Tibial artery (tissue), 4 donors: ENCODE measurements at regions of chr6 and their contacts with region 1.

Region 1: GRCh38 chr6:31139599-31139998 is 733 bp upstream of the PSORS1C2 start:
- DNase-seq: no peak
- H3K4me3 ChIP-seq: no peak overlapping the region
- H3K27ac ChIP-seq: no peak overlapping the region
- H3K4me1 ChIP-seq: peaks cover 0 to 15% (median 4%) of the 10 kb centered on the region in 4 donors
- H3K27me3 ChIP-seq: peaks cover 0 to 10% of the 10 kb centered on the region in 2 donors
- CTCF ChIP-seq: no peak

Region 2: GRCh38 chr6:31332637-31333602 is 193.3 kb after region 1 on chr6:
- intact Hi-C with region 1: no loop called
- DNase-seq: no peak
- H3K4me3 ChIP-seq: no peak overlapping the region
- H3K27ac ChIP-seq: no peak overlapping the region
- H3K4me1 ChIP-seq: no peaks in the 10 kb centered on the region
- H3K27me3 ChIP-seq: no peaks in the 10 kb centered on the region
- CTCF ChIP-seq: no peak

Region 3: DNA sequence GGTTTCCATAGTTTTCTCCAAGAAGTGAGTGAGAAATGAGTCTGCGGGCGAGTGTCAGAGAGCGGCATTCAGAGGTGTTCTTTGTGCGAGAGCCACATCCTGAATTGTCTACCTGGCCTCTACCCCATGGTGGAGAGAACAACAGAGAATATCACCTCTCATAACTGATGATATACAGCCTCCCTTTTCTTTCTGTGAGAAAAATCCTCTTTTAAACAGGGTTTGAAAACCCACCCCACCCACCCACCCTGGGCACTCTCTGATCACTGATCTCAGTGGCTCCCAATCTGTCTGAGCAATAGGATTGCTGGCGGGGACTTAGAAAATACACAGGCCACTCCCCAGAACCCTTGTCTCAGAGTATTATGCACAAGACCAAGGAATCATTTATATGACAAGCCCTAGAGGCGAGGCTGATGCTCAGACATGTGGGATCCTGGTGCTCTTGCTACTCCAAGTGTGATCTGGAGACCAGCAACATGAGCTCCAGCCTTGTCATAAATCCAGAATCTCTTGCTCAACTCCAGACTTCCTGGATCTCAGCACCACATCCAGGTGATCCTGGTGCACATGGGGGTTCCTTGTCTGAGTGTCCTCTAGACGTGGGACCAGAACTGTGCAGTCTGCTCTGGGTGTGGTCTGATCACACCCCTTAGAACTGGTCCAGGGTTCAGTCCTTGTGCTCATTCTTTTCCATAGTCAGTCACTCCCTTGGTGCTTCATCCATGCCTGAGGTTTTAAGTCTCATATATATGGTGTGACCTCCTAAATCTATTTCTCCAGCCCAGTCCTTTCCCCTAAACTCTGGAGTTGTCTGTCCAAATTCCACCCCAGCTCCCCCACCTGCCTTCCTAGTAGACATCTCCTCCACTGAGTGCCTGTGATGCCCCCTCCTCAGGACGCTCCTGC is 212.1 kb after region 1 on chr6:
- intact Hi-C with region 1: loop called (anchors 2 kb)
- DNase-seq: no peak
- H3K4me3 ChIP-seq: no peak overlapping the region
- H3K27ac ChIP-seq: no peak overlapping the region
- H3K4me1 ChIP-seq: peaks cover 0 to 11% (median 2%) of the 10 kb centered on the region in 4 donors
- H3K27me3 ChIP-seq: no peaks in the 10 kb centered on the region
- CTCF ChIP-seq: no peak

Region 4: GRCh38 chr6:31366693-31367470 is 227.3 kb after region 1 on chr6:
- intact Hi-C with region 1: loop called (anchors 1 kb)
- DNase-seq: peak; percentile 70 to 88
- H3K4me3 ChIP-seq: peak overlapping the region in 1 of 2 donors; percentile 39
- H3K27ac ChIP-seq: no peak overlapping the region
- H3K4me1 ChIP-seq: peaks cover 0 to 5% (median 2%) of the 10 kb centered on the region in 4 donors
- H3K27me3 ChIP-seq: peaks cover 0 to 40% of the 10 kb centered on the region in 2 donors
- CTCF ChIP-seq: peak; percentile 92 to 94

Region 5: GRCh38 chr6:31712296-31712695 is 572.7 kb after region 1 on chr6:
- intact Hi-C with region 1: loop called (anchors 5 kb)
- DNase-seq: no peak
- H3K4me3 ChIP-seq: no peak overlapping the region
- H3K27ac ChIP-seq: no peak overlapping the region
- H3K4me1 ChIP-seq: no peaks in the 10 kb centered on the region
- H3K27me3 ChIP-seq: peaks cover 0 to 29% of the 10 kb centered on the region in 2 donors
- CTCF ChIP-seq: peak in 1 of 2 experiments; percentile 8